Esophagus squamous epithelium (tissue), 5 donors: ENCODE measurements at regions of chr2 and their contacts with region 1.

Region 1: DNA sequence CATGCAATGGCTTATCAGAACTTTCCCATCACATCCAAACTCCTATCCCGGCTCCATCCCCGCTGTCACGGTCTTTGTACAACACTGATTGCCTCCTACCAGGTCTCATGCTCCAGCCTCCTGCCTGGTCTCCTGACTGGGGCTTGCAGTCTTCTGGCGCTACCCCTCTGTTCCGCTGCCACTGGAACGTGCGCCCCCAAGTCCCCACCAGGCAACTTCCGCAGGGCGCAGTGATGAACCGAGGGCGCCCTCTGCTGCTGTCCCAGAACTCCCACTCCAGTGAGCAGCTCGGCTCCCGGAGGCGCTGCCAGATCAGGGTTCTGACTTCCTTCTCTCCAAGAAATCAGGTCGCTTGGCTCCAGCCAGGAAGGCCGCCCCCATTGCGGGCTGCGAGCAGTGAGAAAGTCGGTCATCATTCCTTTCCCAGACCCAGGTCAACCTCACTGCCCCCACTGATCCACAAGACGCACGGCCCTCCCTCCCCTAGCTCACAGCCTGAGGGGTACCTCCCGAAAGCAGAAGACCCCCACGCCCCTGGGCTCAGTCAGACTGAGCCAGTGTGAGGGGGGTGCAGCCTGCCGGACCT is 43.9 kb upstream of the RAB11FIP5 start:
- DNase-seq: no peak
- H3K4me3 ChIP-seq: no peak overlapping the region
- H3K27ac ChIP-seq: no peak overlapping the region
- H3K4me1 ChIP-seq: peaks cover 0 to 6% (median 0%) of the 10 kb centered on the region in 3 donors
- H3K27me3 ChIP-seq: peaks cover 0 to 33% (median 0%) of the 10 kb centered on the region in 4 donors
- CTCF ChIP-seq: peak in 5 of 6 experiments; percentile 42 to 63 (median 57)
- POLR2A ChIP-seq: no peak

Region 2: DNA sequence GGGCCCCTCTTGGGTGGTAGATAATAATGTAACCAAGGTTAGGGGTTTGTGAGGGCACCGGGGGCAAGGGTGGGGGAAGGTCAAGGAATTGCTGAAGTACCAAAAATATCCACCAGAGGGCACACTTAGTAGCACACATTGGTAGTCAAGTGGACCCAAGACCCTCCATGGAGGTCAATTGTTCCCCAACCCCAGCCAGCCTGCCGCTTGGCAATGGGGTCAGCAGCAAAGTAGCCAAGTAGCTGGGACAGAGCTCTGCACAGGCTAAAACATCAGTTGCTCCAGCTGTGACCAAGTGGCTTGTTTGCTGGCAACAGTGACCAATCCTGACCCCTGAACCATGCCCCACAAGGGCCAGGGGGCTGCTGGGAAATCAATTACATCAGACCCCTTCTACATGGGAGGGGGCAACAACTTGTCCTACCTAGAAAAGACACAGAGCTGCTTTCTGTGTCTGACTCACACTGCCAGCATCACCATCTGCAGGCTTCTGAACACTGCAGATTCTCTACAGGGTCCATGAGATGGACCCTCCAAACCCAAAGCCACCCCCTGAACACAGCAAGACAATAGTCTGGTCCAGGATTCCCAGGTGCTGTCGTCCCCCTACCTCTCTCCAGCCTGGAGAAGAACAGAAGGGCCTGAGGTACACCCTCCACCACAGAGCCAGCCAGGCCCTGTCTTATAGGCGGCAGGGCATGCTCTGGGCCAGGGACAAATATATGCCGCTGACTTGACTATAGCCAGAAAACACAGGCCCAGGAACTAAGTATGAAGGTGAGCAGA is 163.3 kb before region 1 on chr2:
- intact Hi-C with region 1: loop called (anchors 5 kb)
- DNase-seq: no peak
- H3K4me3 ChIP-seq: no peak overlapping the region
- H3K27ac ChIP-seq: no peak overlapping the region
- H3K4me1 ChIP-seq: no peaks in the 10 kb centered on the region
- H3K27me3 ChIP-seq: no peaks in the 10 kb centered on the region
- CTCF ChIP-seq: peak; percentile 58 to 86 (median 74)
- POLR2A ChIP-seq: no peak

Region 3: GRCh38 chr2:73085691-73086360 is 70.8 kb before region 1 on chr2:
- intact Hi-C with region 1: loop called (anchors 5 kb)
- DNase-seq: peak; percentile 34
- H3K4me3 ChIP-seq: no peak overlapping the region
- H3K27ac ChIP-seq: no peak overlapping the region
- H3K4me1 ChIP-seq: peaks cover 0 to 43% (median 0%) of the 10 kb centered on the region in 3 donors
- H3K27me3 ChIP-seq: no peaks in the 10 kb centered on the region
- CTCF ChIP-seq: peak; percentile 60 to 89 (median 80)
- POLR2A ChIP-seq: no peak

Region 4: DNA sequence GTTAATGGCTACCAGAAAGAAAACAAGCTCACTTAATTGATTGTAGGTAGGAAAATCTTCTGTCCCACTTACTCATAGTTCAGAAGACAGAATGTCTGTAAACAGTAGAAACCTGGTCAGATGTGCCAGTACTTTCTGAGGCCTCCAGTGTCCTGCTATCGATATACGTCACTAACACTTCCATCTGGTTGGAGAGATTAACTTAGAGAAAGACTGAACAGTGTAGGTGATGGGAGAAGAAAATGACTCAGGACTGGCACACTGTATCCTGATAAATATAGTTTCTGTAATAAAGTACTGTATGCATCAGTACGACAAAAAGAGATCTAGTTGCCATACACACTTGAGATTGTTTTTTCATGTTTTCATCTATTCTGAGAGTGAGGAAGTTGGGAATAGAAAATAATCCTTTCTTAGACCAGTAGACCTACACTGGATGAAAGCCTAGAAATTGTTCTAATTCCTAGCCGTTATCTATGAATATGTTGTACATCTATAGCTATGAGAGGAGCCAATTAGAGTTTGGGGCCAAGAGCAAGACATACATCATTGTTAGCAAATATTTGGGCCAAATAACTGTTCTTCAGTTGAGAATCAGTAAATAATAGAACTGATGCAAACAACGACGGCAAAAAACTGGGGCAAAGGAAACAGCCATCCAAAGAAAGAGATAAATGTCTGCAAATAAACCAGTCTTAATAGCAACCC is 379.7 kb after region 1 on chr2:
- intact Hi-C with region 1: no loop called
- DNase-seq: no peak
- H3K4me3 ChIP-seq: no peak overlapping the region
- H3K27ac ChIP-seq: no peak overlapping the region
- H3K4me1 ChIP-seq: no peaks in the 10 kb centered on the region
- H3K27me3 ChIP-seq: no peaks in the 10 kb centered on the region
- CTCF ChIP-seq: no peak
- POLR2A ChIP-seq: no peak

Region 5: DNA sequence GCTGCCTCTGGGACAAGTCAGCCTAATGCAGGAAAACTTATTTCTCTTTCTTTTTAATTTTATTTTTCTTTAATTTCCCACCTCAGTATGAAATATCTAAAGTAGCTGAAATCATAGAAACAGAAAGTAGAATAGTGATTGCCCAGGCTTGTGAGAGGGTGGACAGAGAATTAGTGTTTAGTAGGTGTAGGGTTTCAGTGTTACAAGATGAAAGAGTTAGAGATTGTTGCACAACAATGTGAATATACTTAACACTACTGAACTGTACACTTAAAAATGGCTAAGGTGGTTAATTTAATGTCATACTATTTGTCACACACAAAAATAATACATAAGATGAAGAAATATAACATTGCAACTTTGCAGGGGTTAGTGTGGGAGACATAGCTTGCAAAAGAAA is 404.8 kb after region 1 on chr2:
- intact Hi-C with region 1: no loop called
- DNase-seq: no peak
- H3K4me3 ChIP-seq: no peak overlapping the region
- H3K27ac ChIP-seq: no peak overlapping the region
- H3K4me1 ChIP-seq: no peaks in the 10 kb centered on the region
- H3K27me3 ChIP-seq: no peaks in the 10 kb centered on the region
- CTCF ChIP-seq: no peak
- POLR2A ChIP-seq: no peak